ENCODE measurements at regions of chr2 and their contacts with region 1.

Region 1: DNA sequence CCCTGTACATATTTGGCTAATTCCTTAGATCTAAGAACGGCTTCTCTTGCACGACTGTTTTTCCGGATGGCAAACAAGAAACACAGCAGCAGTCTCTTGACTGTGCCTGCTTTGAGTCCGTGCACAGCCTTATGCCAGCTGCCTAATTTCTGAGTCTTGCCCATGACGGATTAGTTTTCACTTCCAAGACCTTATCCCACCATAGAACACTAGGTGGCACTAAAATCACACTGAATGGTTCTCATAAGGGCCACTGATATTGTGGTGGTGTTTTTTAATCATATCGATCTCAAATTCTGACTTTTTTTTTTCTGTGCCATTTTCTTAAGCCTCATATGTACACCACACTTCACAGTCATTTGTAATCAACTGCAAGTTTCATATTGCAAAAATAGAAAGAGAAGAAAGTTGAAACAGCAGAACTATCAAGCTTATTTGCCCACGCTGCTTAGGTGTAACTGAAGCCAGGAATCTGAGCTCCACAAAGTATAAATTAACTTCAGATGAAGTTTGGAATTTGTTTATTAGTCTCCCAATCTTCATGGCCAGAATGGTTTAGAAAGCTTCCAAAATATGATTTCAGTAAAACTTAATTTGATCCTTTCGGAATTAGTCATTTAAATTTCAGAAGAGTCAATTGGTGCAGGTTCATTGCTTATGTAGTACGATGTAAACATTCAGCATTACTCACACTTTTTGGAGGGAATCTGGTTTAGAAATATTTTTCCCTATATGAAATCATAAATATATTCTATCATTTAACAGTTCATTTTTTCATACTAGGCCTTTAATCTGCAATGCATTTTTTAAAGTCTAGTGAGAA is 45.5 kb upstream of the SCN7A start:
- DNase-seq: peak; percentile 17
- CTCF ChIP-seq: peak; percentile 68

Region 2: GRCh38 chr2:166335284-166335683 is 204.3 kb before region 1 on chr2:
- in situ Hi-C with region 1: no loop called
- DNase-seq: no peak
- CTCF ChIP-seq: no peak

Region 3: DNA sequence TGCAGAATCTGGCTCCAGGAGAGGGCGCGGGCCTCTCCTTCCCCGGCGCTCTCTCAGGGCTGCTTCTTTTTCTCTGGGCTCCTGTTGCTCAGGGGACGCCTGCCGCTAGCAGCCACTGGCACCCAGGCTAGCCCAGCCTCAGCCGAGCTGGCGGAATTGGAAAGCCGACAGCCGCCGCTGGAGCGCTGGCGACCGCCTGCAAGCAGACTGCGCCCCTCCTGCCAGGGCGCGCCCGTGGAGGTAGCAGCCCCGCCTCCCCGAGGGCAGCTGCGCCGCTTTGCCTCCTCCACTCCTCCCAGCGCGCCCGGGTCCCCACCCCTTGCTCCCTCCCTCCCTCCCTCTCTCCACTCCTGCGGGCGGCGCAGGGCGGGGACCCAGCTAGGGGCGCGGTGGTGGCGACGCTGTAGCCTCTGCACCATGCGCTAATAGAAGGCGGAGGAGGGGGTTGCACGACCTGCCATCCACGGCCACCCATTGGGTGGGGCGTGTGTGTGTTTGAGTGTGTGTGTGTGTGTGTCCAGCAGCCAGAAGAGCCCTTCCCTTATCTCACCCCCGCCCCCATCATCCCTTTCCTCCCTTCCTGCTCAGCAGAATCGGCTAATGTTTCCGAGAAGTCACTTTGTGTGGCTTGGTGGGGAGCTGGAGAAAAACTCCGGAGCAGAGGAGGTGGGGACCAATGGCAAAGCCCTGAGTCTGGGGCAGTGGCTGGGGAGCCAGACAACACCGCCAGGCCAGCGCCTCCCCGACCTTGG is 163.6 kb before region 1 on chr2 and contains the start of gene SCN9A:
- in situ Hi-C with region 1: no loop called
- DNase-seq: peak; percentile 13
- CTCF ChIP-seq: no peak

Region 4: GRCh38 chr2:167212014-167212648 is 672.6 kb after region 1 on chr2:
- in situ Hi-C with region 1: loop called (anchors 25 kb)
- DNase-seq: peak; percentile 28
- CTCF ChIP-seq: peak; percentile 58

Region 5: GRCh38 chr2:168118733-168119514 is 1579.4 kb after region 1 on chr2:
- in situ Hi-C with region 1: loop called (anchors 25 kb)
- DNase-seq: peak; percentile 8
- CTCF ChIP-seq: peak; percentile 65

Measured in GM13977 (cell line).